ENCODE measurements at regions of chr1 and their contacts with region 1.

Region 1: GRCh38 chr1:40951943-40952743 is 27.4 kb upstream of the CTPS1 start:
- DNase-seq: peak; percentile 69 to 74
- H3K4me3 ChIP-seq: no peak overlapping the region
- H3K27ac ChIP-seq: no peak overlapping the region
- H3K4me1 ChIP-seq: no peaks in the 10 kb centered on the region
- H3K27me3 ChIP-seq: no peaks in the 10 kb centered on the region
- CTCF ChIP-seq: peak; percentile 89 to 96 (median 90)
- POLR2A ChIP-seq: no peak

Region 2: DNA sequence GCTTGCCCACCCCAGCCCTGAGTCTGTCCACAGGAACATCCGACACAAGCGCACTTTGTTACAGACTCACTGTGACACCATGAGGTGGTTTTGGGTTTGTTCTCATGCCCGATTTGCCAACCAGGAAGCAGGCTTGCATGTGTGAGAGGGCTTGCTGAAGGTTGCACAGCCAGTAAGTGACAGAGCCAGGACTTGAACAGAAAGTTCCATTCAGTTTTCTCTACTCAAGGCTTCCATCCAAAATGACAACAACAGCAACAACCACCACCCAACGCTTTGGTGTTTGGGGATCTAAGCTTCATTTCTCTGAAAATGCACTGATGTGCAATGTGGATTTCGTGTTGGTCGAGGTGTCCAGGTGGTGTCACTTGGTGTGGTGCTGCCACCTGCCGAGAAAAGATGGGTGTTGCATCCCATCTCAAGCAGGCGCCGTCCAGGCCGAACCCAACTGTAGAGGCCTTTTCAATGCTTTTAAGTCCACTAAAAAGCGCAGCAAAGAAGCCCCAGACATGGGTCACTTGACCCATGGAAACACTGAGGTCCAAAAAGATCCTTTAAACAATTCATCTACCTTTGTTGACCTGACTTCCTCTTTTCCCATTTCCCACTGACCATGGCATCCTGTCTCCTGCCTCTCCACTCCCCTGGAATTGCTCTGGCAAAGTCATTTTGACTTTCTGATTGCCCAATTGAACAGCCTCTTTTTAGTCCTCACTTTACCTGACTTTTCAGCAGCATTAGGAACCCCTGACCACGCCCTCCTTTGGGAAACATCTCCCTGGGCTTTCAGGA is 102.1 kb before region 1 on chr1:
- intact Hi-C with region 1: loop called (anchors 5 kb)
- DNase-seq: peak; percentile 69 to 70
- H3K4me3 ChIP-seq: no peak overlapping the region
- H3K27ac ChIP-seq: no peak overlapping the region
- H3K4me1 ChIP-seq: no peaks in the 10 kb centered on the region
- H3K27me3 ChIP-seq: no peaks in the 10 kb centered on the region
- CTCF ChIP-seq: peak; percentile 83 to 91 (median 88)
- POLR2A ChIP-seq: no peak

Region 3: GRCh38 chr1:40862008-40862863 is 89.9 kb before region 1 on chr1 and contains the start of gene CITED4:
- intact Hi-C with region 1: loop called (anchors 5 kb)
- DNase-seq: peak; percentile 95 to 97
- H3K4me3 ChIP-seq: peak within 1 kb of the TSS; percentile 40 to 93
- H3K27ac ChIP-seq: peak within 1 kb of the TSS; percentile 85 to 95
- H3K4me1 ChIP-seq: peaks cover 0 to 7% of the 10 kb centered on the region in 2 donors
- H3K27me3 ChIP-seq: no peaks in the 10 kb centered on the region
- CTCF ChIP-seq: peak in 3 of 4 experiments; percentile 30 to 32 (median 31)
- POLR2A ChIP-seq: peak; percentile 98 to 99
- total RNA-seq, gene CITED4: 4.1 to 99.9 (median 19.9) TPM

Measured in uterus (tissue), 4 donors.